ENCODE measurements at regions of chr11 and their contacts with region 1.

Region 1: DNA sequence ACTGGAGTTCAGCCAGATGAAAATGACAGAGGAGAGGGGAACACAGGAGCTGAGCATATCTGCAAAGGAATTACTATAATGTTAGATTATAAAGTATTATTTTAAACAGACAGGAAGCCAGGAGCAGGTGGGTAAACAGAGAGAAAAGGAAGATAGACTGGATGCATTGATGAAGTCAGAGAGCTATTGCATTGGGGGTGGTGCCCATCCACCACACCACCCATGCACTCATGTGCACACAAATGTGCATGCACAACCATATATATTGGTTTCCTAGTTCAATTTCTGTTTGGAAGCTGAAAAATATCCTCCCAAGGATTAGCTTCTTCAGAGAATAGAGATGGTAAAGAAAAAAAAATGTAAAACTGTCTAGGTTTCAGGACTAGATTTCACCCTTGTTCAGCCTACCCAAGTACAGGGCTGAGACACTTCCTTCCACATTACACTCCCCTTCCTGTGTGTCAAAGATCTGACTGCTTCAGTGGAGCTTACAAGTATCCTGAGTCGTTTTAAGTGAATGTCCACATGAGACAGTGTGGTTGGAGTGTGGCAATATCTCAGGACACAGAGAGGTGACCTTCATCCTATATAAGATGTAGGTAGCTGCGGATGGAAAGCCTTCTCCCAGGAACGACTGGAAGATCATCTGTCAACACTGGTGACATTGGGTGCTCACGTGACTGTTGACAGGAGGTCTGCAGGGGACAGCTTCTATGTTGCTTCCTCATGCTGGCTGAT is 12.2 kb upstream of the SMPD1 start:
- DNase-seq: no peak
- H3K27ac ChIP-seq: no peak overlapping the region
- CTCF ChIP-seq: no peak

Region 2: GRCh38 chr11:6152086-6152485 is 226.0 kb before region 1 on chr11:
- CTCF ChIA-PET with region 1: no interaction called
- POLR2A ChIA-PET with region 1: no interaction called
- DNase-seq: no peak
- H3K27ac ChIP-seq: no peak overlapping the region
- CTCF ChIP-seq: no peak

Region 3: GRCh38 chr11:6297831-6298230 is 80.2 kb before region 1 on chr11:
- CTCF ChIA-PET with region 1: no interaction called
- POLR2A ChIA-PET with region 1: no interaction called
- DNase-seq: peak; percentile 41
- H3K27ac ChIP-seq: no peak overlapping the region
- CTCF ChIP-seq: peak; percentile 21

Region 4: DNA sequence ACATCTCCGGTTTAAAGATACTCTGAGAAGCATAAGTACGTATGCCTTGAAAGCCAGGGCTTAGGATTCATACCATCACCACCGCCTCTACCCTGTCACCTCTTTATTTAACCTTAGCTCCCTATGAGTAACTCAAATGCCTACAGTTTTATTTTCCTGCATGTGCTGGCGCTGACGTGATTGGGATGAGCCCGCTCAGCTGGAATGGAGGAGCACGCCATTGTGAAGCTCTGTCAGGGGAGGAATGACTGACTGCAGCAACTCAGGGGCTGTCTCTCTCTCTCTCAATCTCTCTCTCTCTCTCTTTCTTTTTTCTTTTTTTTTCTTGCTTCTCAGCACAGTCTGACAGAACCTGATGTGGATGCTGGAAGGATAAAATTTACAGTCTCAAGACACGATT is 70.2 kb before region 1 on chr11:
- CTCF ChIA-PET with region 1: no interaction called
- POLR2A ChIA-PET with region 1: no interaction called
- DNase-seq: peak; percentile 14
- H3K27ac ChIP-seq: no peak overlapping the region
- CTCF ChIP-seq: no peak

Region 5: DNA sequence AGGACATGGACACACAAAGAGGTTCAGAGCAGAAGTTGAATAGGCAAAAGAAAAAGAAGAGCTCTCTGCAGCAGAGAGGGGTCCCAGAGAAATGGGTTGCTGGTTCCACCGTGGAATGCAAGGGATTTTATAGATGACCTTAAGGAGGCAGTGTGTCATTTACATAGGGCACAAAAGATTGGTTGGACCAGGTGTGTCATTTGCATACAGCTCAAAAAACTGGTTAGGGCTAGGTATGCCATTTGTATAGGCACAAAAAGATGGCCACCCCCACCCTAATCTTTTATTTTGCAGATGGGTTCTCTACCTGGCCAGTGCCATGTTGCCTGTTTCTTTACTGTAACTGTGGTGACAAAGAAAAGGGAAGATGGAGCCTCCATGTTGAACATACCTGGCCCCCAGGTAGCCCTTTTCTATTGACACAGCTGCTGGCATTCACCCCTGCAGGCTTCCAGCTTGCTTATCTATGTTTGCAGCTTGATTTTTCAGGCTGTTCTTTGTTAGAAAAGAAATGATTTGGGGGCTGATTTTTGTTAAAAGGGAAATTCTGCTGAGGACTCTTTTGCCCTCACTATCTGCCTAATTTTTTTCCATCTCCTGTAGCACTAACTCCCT is 54.7 kb before region 1 on chr11:
- CTCF ChIA-PET with region 1: no interaction called
- POLR2A ChIA-PET with region 1: no interaction called
- DNase-seq: no peak
- H3K27ac ChIP-seq: no peak overlapping the region
- CTCF ChIP-seq: no peak

Region 6: DNA sequence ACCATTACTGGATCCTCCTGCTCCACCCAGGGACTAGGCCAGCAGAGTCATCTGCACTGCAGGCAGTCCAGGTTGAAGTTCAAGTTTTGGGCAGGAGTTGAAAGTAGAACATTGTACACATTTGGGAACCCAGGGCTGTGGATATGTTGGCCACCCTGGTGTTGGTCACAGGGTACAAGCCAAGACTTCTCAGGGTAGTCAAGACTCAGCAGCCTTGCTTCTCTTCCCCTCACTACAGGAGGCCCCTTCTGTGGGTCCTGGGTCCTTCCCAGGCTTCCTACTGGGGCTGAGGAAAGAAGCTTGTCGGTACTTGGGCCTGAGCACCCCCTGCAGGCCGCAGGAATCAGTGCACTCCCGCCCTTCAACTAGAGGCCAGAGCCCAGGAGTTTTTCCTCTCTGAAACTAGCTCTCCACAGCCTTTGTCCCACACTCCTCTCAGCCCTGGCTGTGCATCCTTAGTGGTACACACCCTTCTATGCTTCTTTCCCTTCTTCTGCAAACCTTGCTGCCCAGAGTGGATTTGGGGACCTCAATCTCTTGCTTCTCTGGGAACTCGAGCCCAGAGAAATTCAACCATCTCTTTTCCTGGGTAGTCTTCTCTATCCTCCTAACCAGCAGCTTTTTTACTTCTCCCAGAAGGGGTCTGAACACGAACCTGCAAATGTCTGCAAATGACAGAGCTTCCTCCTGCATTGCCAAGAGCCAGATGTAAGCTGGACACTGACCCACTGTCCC is 65.4 kb after region 1 on chr11:
- CTCF ChIA-PET with region 1: interaction called, 27 read pairs
- POLR2A ChIA-PET with region 1: interaction called, 3 read pairs
- DNase-seq: peak; percentile 46
- H3K27ac ChIP-seq: no peak overlapping the region
- CTCF ChIP-seq: peak; percentile 39

Region 7: GRCh38 chr11:6505577-6506240 is 127.6 kb after region 1 on chr11:
- CTCF ChIA-PET with region 1: interaction called, 14 read pairs
- POLR2A ChIA-PET with region 1: interaction called, 3 read pairs
- DNase-seq: peak; percentile 74
- H3K27ac ChIP-seq: no peak overlapping the region
- CTCF ChIP-seq: peak; percentile 80

Measured in RWPE1 (cell line).